Astrocyte of the cerebellum (primary cell): ENCODE measurements at regions of chr10 and their contacts with region 1.

Region 1: DNA sequence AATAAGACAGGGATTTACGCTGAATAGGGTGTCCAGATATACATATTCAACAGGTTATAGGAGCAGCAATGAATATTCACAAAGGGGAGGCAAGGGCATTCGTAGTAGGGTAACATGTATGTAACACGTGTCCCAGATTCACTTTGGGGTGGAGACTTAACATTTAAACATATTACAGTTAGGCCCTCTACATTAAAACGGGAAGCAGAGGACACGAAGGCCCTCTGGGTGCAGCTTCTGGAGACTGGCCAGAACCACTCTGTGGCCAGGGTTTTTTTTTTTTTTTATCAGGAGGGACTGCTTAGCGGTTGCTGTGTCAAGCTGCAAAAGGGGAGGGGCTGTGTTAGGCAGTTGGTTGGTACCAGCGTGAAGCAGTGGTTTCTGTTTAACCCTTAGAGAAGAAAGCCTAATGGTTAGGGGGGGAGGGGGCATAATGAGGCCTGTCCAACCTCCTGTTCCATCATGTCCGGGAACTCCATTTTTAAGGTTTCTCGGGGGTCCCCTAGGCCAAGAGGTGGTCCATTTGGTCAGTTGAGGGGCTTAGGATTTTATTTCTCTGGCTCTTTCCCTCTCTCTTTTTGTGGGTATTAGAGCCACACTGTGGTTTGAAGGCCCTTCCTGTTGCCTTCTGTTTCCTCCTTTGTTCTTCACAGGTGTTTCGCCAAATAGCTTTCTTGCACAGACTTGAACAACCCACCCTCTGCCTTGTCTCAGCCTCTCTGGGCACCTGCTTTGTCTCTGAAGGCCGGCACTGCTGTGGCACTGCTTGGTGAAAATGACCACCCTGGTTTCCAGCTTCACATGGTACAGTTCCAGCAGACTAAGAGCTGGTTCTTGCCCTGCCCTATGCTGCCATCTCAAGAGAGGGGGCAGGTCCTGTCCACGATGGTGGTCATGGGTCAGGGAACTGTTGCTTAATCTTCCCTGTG is 26.4 kb downstream of the PRF1 start:
- DNase-seq: no peak
- H3K4me3 ChIP-seq: no peak overlapping the region
- CTCF ChIP-seq: no peak

Region 2: GRCh38 chr10:70523057-70523456 is 53.1 kb before region 1 on chr10:
- in situ Hi-C with region 1: loop called (anchors 5 kb)
- DNase-seq: no peak
- H3K4me3 ChIP-seq: no peak overlapping the region
- CTCF ChIP-seq: no peak

Region 3: DNA sequence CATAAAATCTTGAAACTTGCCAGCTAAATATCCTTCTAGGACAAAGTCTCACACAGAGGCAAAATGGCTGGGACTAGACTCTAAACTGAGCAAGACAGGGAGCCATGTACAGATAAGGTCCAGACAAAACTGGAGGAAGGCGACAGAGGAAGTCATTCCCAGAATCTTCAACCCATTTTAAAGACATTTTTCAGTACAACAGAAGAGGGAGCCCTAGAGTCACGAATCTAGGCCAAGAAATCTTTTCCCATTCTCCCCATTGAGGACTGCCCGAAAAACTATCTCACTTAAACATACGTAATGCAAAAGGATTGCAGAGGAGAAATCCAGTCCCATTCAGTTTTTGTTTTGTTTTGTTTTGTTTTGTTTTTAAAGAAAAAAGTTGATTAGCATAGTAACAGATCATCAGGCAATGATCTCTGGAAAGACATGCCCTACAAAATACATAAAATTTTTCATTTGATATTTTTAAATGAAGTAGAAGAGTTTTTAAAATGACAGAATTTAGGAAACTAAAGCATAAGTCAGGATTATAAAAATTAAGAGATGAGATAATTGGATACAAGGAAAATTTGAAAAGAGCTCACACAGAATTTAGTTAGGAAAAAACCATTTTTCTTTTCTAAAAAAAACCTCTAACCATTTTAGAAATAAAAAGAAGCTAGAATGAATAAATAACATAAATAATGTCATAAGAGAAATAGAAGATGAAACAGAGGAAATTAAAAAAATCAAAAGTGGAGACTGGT is 43.3 kb after region 1 on chr10:
- in situ Hi-C with region 1: no loop called
- DNase-seq: no peak
- H3K4me3 ChIP-seq: no peak overlapping the region
- CTCF ChIP-seq: peak; percentile 25

Region 4: GRCh38 chr10:70656489-70656888 is 80.4 kb after region 1 on chr10:
- in situ Hi-C with region 1: loop called (anchors 5 kb)
- DNase-seq: peak; percentile 98
- H3K4me3 ChIP-seq: no peak overlapping the region
- CTCF ChIP-seq: no peak